B cell (primary cell): ENCODE measurements at regions of chr6 and their contacts with region 1.

Region 1: DNA sequence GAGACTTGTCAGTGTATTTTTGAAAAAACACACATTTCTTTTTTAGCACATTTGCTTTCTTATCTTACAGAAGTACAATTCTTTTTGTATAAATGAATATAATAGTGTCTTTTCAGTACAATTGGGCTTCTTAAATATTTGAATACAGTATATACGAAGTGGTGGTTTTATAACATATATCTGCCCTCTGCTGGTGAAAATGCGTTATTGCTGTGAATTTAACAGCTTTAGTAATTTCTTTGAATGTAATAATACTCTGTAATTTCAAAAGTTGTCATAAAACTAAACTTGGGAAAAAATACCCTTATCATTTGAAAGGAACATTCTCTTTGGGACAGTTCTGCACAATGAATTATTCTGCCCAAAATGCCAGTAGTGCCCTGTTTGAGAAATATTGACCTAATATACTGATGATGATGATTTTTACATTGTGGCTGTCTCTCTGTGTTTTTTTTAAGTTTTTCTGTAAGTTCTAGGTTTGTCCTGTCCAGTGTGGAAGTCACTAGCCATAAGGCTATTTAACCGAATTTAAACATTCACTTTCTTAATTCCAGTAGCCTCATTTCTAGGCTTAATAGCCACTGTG is 19.0 kb downstream of the SMAP1 start:
- DNase-seq: peak; percentile 56
- ATAC-seq: no peak
- H3K4me3 ChIP-seq: no peak overlapping the region
- H3K4me3 Mint-ChIP-seq: no peak overlapping the region
- H3K27ac ChIP-seq: no peak overlapping the region
- H3K27ac Mint-ChIP-seq: no peak overlapping the region
- H3K4me1 ChIP-seq: no peaks in the 10 kb centered on the region
- H3K4me1 Mint-ChIP-seq: peaks cover 30% of the 10 kb centered on the region
- H3K27me3 ChIP-seq: no peaks in the 10 kb centered on the region
- H3K27me3 Mint-ChIP-seq: no peaks in the 10 kb centered on the region
- CTCF ChIP-seq: peak; percentile 92

Region 2: GRCh38 chr6:70310063-70310694 is 376.5 kb before region 1 on chr6:
- CTCF ChIA-PET with region 1: interaction called, 43 read pairs
- POLR2A ChIA-PET with region 1: no interaction called
- intact Hi-C with region 1: loop called (anchors 1 kb)
- DNase-seq: peak; percentile 38
- ATAC-seq: no peak
- H3K4me3 ChIP-seq: no peak overlapping the region
- H3K4me3 Mint-ChIP-seq: no peak overlapping the region
- H3K27ac ChIP-seq: no peak overlapping the region
- H3K27ac Mint-ChIP-seq: no peak overlapping the region
- H3K4me1 ChIP-seq: no peaks in the 10 kb centered on the region
- H3K4me1 Mint-ChIP-seq: no peaks in the 10 kb centered on the region
- H3K27me3 ChIP-seq: peaks cover 0 to 3% (median 0%) of the 10 kb centered on the region in 4 experiments
- H3K27me3 Mint-ChIP-seq: peaks cover 36% of the 10 kb centered on the region
- CTCF ChIP-seq: peak; percentile 77

Region 3: GRCh38 chr6:70413114-70413991 is 273.3 kb before region 1 on chr6 and contains the start of gene FAM135A:
- CTCF ChIA-PET with region 1: interaction called, 4 read pairs
- POLR2A ChIA-PET with region 1: no interaction called
- intact Hi-C with region 1: loop called (anchors 5 kb)
- DNase-seq: peak; percentile 97
- ATAC-seq: peak; percentile 98
- H3K4me3 ChIP-seq: peak within 1 kb of the TSS; percentile 71 to 88 (median 79)
- H3K4me3 Mint-ChIP-seq: peak within 1 kb of the TSS; percentile 97
- H3K27ac ChIP-seq: peak within 1 kb of the TSS; percentile 67 to 76
- H3K27ac Mint-ChIP-seq: peak within 1 kb of the TSS; percentile 87
- H3K4me1 ChIP-seq: peaks cover 7 to 17% of the 10 kb centered on the region in 2 donors
- H3K4me1 Mint-ChIP-seq: peaks cover 23% of the 10 kb centered on the region
- H3K27me3 ChIP-seq: no peaks in the 10 kb centered on the region
- H3K27me3 Mint-ChIP-seq: no peaks in the 10 kb centered on the region
- CTCF ChIP-seq: no peak
- total RNA-seq, gene FAM135A: 28.9 and 30.6 TPM in 2 replicates

Region 4: DNA sequence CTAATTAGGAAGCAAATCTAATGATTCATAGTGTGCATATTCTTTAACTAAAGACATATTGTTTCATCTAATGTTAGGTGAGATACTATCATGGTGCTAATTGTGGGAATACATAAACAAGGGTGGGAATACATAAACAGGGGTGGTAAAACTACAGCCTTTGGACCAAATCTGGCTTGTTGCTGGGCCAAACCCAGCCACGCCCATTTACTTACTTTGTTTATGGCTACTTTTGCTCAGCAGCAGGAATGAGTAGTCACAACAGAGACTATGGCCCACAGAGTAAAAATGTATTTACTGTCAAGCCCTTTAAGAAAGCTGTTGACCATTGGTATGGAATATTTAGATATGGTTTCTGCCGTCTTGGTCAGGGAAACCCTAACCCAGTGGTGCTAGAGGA is 241.6 kb before region 1 on chr6:
- CTCF ChIA-PET with region 1: no interaction called
- POLR2A ChIA-PET with region 1: no interaction called
- intact Hi-C with region 1: no loop called
- DNase-seq: no peak
- ATAC-seq: no peak
- H3K4me3 ChIP-seq: no peak overlapping the region
- H3K4me3 Mint-ChIP-seq: no peak overlapping the region
- H3K27ac ChIP-seq: no peak overlapping the region
- H3K27ac Mint-ChIP-seq: no peak overlapping the region
- H3K4me1 ChIP-seq: no peaks in the 10 kb centered on the region
- H3K4me1 Mint-ChIP-seq: no peaks in the 10 kb centered on the region
- H3K27me3 ChIP-seq: no peaks in the 10 kb centered on the region
- H3K27me3 Mint-ChIP-seq: no peaks in the 10 kb centered on the region
- CTCF ChIP-seq: no peak

Region 5: DNA sequence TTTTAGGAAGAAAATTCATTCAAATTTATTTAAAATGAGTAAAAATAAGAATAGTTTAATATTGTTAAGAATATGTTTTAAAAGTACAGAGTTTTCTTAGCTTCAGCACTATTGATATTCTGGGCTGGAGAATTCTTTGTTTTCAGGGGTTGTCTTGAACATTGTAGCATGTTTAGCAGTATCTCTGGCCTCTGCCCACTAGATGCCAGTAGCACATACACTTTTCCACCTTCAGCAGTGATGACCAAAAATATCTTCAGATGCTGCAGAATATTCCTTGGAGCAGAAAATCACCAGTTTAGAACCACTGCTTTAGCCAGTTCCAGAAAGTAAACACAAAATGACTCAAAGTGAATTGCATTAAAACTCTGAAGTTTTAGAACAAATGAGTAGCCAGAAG is 139.3 kb before region 1 on chr6:
- CTCF ChIA-PET with region 1: interaction called, 20 read pairs
- POLR2A ChIA-PET with region 1: no interaction called
- intact Hi-C with region 1: loop called (anchors 2 kb)
- DNase-seq: no peak
- ATAC-seq: no peak
- H3K4me3 ChIP-seq: no peak overlapping the region
- H3K4me3 Mint-ChIP-seq: no peak overlapping the region
- H3K27ac ChIP-seq: no peak overlapping the region
- H3K27ac Mint-ChIP-seq: no peak overlapping the region
- H3K4me1 ChIP-seq: no peaks in the 10 kb centered on the region
- H3K4me1 Mint-ChIP-seq: no peaks in the 10 kb centered on the region
- H3K27me3 ChIP-seq: no peaks in the 10 kb centered on the region
- H3K27me3 Mint-ChIP-seq: no peaks in the 10 kb centered on the region
- CTCF ChIP-seq: no peak

Region 6: DNA sequence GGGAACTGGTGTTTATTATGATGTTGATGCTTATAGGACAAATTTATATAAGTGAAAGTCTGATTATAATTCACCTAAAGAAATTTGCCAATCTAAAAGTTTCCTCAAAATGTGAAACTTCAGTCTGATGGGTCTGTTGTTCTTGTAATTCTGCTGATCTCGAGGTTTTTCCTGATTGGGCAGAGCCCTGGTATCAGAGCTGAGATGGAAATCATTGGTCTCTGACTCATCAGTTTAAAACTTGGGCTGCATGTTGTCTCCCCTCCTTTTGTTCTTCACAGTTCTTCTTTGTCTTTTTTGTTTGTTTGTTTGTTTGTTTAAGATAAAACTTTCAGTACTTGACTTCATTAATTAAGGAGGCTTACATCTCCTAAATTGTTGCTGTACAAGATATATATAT is 13.0 kb before region 1 on chr6:
- CTCF ChIA-PET with region 1: interaction called, 29 read pairs
- POLR2A ChIA-PET with region 1: no interaction called
- intact Hi-C with region 1: loop called (anchors 2 kb)
- DNase-seq: no peak
- ATAC-seq: no peak
- H3K4me3 ChIP-seq: no peak overlapping the region
- H3K4me3 Mint-ChIP-seq: no peak overlapping the region
- H3K27ac ChIP-seq: no peak overlapping the region
- H3K27ac Mint-ChIP-seq: no peak overlapping the region
- H3K4me1 ChIP-seq: peaks cover 9 to 14% of the 10 kb centered on the region in 2 donors
- H3K4me1 Mint-ChIP-seq: peaks cover 39% of the 10 kb centered on the region
- H3K27me3 ChIP-seq: no peaks in the 10 kb centered on the region
- H3K27me3 Mint-ChIP-seq: no peaks in the 10 kb centered on the region
- CTCF ChIP-seq: no peak